Right cardiac atrium (tissue), 5 donors: ENCODE measurements at regions of chr15 and their contacts with region 1.

Region 1: DNA sequence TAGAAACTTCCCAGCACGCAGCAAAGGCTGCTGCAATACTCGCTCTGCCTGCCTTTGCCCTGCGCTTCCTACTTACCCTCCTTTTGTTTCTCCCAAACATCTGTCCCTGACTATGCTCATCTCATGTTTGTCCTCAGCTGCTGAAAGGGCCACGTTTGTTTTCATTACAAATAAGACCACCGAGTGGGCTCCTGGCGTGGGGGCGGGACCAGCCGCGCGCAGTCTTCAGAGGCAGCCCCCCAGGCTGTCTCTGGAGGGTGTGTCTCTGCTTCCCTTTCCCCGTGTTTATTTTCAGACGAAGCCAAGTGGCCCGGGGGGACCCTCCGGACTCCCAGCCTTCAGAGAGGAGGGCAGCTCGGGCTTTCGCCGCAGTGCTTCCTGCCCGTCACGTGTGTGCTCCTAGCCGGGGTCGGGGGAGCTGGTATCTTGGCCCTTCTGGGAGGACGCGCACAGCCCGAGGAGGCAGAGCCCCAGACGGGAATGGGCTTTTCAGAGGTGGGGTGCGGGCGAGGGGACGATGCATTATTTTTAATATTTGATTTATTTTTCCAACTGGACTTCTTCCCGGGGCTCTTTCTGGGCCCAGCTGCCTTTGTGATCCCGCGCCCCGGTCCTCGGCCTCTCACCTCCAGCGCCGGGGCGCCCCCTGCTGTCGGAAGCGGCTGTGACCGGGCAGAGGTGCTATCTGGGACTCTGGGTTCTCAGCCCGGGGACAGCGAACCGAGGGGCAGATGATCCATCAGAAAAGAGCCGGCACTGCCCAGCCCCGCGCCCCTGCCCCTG is 70.0 kb upstream of the CGNL1 start:
- DNase-seq: peak; percentile 88 to 96 (median 96)
- ATAC-seq: peak; percentile 89
- H3K4me3 ChIP-seq: peak overlapping the region; percentile 55
- H3K27ac ChIP-seq: no peak overlapping the region
- H3K4me1 ChIP-seq: no peaks in the 10 kb centered on the region
- H3K27me3 ChIP-seq: no peaks in the 10 kb centered on the region

Region 2: DNA sequence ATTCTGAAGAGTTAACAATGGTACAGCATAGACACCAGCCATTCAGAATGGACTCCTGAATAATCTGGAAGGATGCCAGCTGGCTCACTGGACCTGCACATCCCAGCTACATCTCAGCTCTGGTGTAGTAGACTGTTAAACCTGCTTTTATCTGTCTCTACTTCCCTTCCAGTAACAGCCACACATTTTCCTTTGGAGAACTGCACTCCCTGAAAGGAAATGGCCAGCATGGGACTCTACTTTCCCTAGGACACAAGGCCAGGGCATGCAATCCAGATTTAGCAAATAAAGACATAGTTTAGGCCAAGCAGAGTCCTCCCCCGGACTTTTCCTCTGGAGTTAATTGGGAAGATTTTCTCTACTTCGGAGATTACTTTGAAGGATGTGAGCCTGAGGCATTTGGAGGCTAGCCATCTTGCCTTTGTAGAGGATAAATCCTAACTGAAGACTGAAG is 470.6 kb before region 1 on chr15:
- intact Hi-C with region 1: loop called in 1 of 4 experiments (anchors 10 kb)
- DNase-seq: no peak
- ATAC-seq: peak; percentile 44 to 76
- H3K4me3 ChIP-seq: no peak overlapping the region
- H3K27ac ChIP-seq: no peak overlapping the region
- H3K4me1 ChIP-seq: peaks cover 2% of the 10 kb centered on the region
- H3K27me3 ChIP-seq: no peaks in the 10 kb centered on the region

Region 3: DNA sequence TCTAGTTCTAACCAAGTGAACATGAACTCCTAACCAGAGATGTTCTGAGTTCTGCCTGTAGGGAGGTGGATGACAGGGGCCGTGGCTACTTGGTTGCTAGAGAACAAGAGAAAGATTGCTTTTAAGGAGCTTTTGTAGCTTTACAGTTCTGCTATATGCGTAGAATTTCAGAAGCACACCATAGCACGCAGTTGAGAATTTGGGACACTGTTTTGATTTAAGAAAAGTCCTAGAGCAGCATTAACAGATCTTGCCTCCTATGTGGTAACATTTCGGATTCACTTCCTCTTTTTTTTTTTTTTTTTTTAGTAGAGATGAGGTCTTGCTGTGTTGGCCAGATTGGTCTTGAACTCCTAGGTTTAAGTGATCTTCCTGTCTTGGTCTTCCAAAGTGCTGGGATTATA is 206.2 kb before region 1 on chr15:
- intact Hi-C with region 1: no loop called
- DNase-seq: no peak
- ATAC-seq: no peak
- H3K4me3 ChIP-seq: no peak overlapping the region
- H3K27ac ChIP-seq: no peak overlapping the region
- H3K4me1 ChIP-seq: no peaks in the 10 kb centered on the region
- H3K27me3 ChIP-seq: no peaks in the 10 kb centered on the region